ENCODE measurements at regions of chr16 and their contacts with region 1.

Region 1: DNA sequence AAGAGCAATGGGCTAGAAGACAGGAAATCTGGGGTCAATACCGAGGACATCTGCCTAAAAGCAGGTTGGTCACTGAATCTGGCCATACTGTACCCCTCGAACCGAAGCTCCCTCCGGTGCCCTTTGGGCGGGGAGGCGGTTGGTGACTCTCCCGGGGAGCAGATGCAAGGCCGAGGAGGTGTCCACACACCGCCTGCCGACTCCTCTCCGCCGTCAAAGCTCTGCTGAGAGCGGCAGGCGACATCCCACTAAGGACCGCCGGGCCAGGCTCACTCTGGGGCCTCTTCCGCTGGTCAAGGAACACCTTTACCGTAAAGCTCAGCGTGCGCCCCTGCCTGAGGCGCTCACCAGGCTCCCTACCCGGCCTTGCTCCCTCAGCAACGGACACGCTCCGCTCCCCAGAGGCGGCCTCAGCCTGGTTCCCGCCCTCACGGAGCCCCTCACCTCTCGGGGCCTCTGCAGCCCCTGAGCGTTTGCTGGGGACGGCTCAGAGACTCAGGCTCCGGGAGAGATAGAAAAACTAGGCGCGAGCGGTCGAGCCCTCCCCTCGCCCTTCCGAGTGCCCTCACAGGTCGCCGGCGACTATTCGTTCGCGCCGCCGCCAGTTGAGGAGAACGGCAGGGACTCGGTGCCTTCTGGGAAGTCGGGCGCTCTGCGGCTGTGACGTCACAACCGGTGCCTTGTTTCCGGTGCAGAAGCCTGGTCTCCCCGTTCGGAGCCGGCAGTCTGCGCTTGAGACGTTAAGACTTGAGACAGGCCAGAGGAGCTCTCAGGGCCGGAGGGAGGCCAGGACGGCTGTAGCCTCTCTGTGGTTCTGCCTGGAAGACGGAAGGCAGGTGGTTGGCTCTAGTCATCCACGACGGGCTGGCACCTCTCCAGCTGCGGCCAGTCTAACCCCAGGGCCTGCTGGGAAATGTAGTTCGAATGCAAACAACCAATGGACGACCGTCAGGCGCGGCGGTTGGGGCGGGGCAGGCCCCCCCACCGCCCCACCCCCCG is at the start of gene ZNF200:
- DNase-seq: peak; percentile 85 to 97 (median 92)
- ATAC-seq: peak; percentile 92 to 95 (median 94)
- H3K4me3 ChIP-seq: peak within 1 kb of the TSS; percentile 72 to 78
- H3K4me3 Mint-ChIP-seq: peak within 1 kb of the TSS; percentile 92 to 95 (median 94)
- H3K27ac ChIP-seq: peak within 1 kb of the TSS; percentile 78
- H3K27ac Mint-ChIP-seq: peak within 1 kb of the TSS; percentile 97 to 99
- H3K4me1 ChIP-seq: peaks cover 2 to 26% of the 10 kb centered on the region in 2 experiments
- H3K4me1 Mint-ChIP-seq: peaks cover 29 to 42% (median 31%) of the 10 kb centered on the region in 3 donors
- H3K27me3 ChIP-seq: no peaks in the 10 kb centered on the region
- H3K27me3 Mint-ChIP-seq: peaks cover 0 to 1% of the 10 kb centered on the region in 2 donors
- total RNA-seq, gene ZNF200: 7.6 to 21.3 (median 20.1) TPM

Region 2: DNA sequence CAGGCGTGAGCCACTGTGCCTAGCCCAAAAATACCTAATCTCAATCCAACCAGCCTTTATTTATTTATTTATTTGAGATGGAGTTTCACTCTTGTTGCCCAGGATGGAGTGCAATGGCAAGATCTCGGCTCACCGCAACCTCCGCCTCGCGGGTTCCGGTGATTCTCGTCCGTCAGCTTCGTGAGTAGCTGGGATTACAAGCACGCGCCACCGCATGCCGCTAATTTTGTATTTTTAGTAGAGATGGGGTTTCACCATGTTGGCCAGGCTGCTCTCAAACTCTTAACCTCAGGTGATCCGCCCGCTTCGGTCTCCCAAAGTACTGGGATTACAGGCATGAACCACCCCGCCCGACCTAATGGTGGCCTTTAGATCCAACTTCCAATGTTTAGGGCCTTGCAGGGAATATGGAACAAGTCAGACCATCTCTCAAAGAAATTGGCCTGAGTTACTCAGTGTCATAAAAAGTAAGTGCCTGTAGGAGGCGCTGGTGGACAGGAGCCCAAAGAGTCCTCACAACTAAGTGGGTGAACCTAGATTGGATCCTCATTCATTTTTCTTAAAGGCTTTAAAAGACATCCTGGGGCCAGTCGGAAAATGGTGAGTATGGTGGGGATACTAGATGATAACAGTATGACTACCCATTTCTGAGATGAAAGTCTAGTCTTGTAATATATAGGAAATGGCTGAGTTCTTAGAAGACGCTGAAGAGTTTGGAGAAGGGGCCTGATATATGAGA is 140.4 kb before region 1 on chr16:
- CTCF ChIA-PET with region 1: no interaction called
- POLR2A ChIA-PET with region 1: interaction called in 1 of 2 experiments, 10 read pairs
- DNase-seq: peak in 26 of 35 experiments; percentile 8 to 82 (median 49)
- ATAC-seq: peak; percentile 42 to 51 (median 47)
- H3K4me3 ChIP-seq: no peak overlapping the region
- H3K4me3 Mint-ChIP-seq: peak overlapping the region in 1 of 3 donors; percentile 38
- H3K27ac ChIP-seq: no peak overlapping the region
- H3K27ac Mint-ChIP-seq: peak overlapping the region; percentile 68 to 79
- H3K4me1 ChIP-seq: peaks cover 3 to 60% of the 10 kb centered on the region in 2 experiments
- H3K4me1 Mint-ChIP-seq: peaks cover 21 to 39% (median 38%) of the 10 kb centered on the region in 3 donors
- H3K27me3 ChIP-seq: no peaks in the 10 kb centered on the region
- H3K27me3 Mint-ChIP-seq: no peaks in the 10 kb centered on the region

Region 3: GRCh38 chr16:3150346-3151218 is 84.3 kb before region 1 on chr16:
- CTCF ChIA-PET with region 1: no interaction called
- POLR2A ChIA-PET with region 1: no interaction called
- DNase-seq: peak; percentile 88 to 100 (median 94)
- ATAC-seq: peak; percentile 84 to 88 (median 88)
- H3K4me3 ChIP-seq: peak overlapping the region; percentile 83 to 84
- H3K4me3 Mint-ChIP-seq: peak overlapping the region; percentile 85 to 93 (median 86)
- H3K27ac ChIP-seq: peak overlapping the region; percentile 75
- H3K27ac Mint-ChIP-seq: peak overlapping the region; percentile 87 to 90
- H3K4me1 ChIP-seq: peaks cover 4 to 38% of the 10 kb centered on the region in 2 experiments
- H3K4me1 Mint-ChIP-seq: peaks cover 20 to 27% (median 22%) of the 10 kb centered on the region in 3 donors
- H3K27me3 ChIP-seq: peaks cover 0 to 17% of the 10 kb centered on the region in 2 experiments
- H3K27me3 Mint-ChIP-seq: peaks cover 0 to 5% of the 10 kb centered on the region in 2 donors

Region 4: DNA sequence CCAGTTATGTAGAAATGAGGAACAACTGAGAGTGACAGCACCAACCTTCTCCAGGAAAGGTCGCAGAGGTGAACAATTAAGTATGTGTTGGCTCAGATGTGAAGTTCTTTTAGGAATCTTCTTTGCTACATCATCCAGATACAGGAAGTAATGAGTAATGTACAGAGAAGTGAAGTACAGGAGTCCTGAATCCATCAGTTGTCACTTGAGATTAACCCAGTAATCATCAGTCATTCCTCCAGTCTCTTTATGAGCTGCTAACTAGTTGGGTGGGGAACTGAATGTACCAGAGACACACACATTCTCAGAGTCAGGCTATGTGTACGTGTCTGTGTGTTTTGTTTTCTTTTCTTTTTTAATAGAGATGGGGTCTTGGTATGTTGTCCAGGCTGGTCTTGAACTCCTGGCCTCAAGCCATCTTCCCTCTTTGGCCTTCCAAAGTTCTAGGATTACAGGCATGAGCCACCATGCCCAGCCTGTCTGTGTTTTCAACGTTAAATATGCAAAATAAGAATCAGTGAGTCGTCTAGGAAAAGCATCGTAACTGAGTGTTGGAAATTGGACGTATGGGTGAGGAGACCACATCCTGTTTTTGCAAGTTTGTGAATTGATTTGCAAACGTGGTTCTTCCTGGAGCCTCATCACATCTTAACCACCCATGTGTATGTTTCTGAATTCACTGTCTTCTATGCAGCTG is 19.8 kb before region 1 on chr16:
- CTCF ChIA-PET with region 1: no interaction called
- POLR2A ChIA-PET with region 1: interaction called in 1 of 2 experiments, 10 read pairs
- DNase-seq: peak in 28 of 35 experiments; percentile 3 to 78 (median 52)
- ATAC-seq: peak; percentile 90 to 94 (median 92)
- H3K4me3 ChIP-seq: peak overlapping the region in 1 of 2 donors; percentile 4
- H3K4me3 Mint-ChIP-seq: peak overlapping the region; percentile 62 to 73 (median 63)
- H3K27ac ChIP-seq: peak overlapping the region; percentile 92
- H3K27ac Mint-ChIP-seq: peak overlapping the region; percentile 96 to 98
- H3K4me1 ChIP-seq: peaks cover 15 to 43% of the 10 kb centered on the region in 2 experiments
- H3K4me1 Mint-ChIP-seq: peaks cover 33 to 51% (median 46%) of the 10 kb centered on the region in 3 donors
- H3K27me3 ChIP-seq: no peaks in the 10 kb centered on the region
- H3K27me3 Mint-ChIP-seq: no peaks in the 10 kb centered on the region

Measured in T-cell (primary cell).